ENCODE measurements at regions of chr7 and their contacts with region 1.

Region 1: DNA sequence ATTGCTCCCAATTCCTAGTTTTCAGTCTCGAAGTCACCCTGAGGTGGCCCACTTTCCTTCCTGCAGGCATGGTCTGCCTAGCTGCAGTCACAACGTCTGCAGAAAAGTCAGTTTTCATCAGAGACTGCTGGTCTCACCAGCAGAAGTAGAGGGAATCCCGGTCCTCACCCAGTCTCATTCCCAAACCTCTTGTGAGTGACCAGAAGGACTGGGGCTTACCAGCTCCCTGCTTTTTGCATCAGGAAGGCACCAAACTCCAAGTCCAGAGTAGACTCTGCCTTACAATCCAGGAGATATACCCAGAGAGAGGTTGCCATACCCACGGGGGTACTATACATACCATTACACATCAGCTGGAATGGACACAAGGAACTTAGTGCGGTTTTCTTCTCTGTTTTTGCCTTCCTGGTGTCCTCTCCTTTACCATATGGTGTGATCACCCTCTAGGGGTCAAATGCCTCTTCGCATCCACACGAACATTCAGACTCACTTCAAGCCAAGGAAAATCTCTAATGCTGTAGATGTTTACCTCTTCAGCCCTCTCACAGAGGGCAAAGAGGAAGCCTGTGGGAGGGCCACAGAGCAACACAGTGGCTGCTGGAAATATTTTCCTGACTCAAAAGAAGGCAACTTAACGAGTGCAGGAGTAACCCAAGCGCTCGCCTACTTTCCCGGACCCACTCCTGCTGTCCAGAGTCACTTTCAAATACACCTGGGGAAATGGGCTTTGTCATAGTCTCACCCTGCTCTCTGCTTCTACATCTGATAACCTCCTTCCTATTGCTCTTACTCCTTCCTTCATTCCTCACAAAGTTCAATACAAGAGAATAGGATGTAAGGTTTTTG is 220.9 kb downstream of the C7orf25 start:
- DNase-seq: peak; percentile 57
- H3K4me3 ChIP-seq: no peak overlapping the region
- H3K27ac ChIP-seq: no peak overlapping the region
- H3K4me1 ChIP-seq: no peaks in the 10 kb centered on the region
- H3K27me3 ChIP-seq: no peaks in the 10 kb centered on the region
- CTCF ChIP-seq: peak; percentile 83 to 84

Region 2: GRCh38 chr7:41977151-41977651 is 713.8 kb before region 1 on chr7:
- CTCF ChIA-PET with region 1: no interaction called
- dilution Hi-C with region 1: no loop called
- in situ Hi-C with region 1: no loop called
- intact Hi-C with region 1: loop called (anchors 1 kb)
- DNase-seq: peak; percentile 41
- H3K4me3 ChIP-seq: no peak overlapping the region
- H3K27ac ChIP-seq: no peak overlapping the region
- H3K4me1 ChIP-seq: no peaks in the 10 kb centered on the region
- H3K27me3 ChIP-seq: no peaks in the 10 kb centered on the region
- CTCF ChIP-seq: peak; percentile 82 to 85

Region 3: GRCh38 chr7:42237162-42237821 is 453.7 kb before region 1 on chr7 and contains the start of gene GLI3:
- CTCF ChIA-PET with region 1: no interaction called
- dilution Hi-C with region 1: no loop called
- in situ Hi-C with region 1: loop called in 1 of 2 experiments (anchors 25 kb)
- intact Hi-C with region 1: loop called (anchors 5 kb)
- DNase-seq: peak; percentile 93
- H3K4me3 ChIP-seq: peak within 1 kb of the TSS; percentile 73 to 92 (median 73)
- H3K27ac ChIP-seq: peak within 1 kb of the TSS; percentile 81
- H3K4me1 ChIP-seq: peaks cover 31% of the 10 kb centered on the region
- H3K27me3 ChIP-seq: no peaks in the 10 kb centered on the region
- CTCF ChIP-seq: peak; percentile 5 to 43
- total RNA-seq, gene GLI3: 6.3 to 26.2 TPM

Region 4: DNA sequence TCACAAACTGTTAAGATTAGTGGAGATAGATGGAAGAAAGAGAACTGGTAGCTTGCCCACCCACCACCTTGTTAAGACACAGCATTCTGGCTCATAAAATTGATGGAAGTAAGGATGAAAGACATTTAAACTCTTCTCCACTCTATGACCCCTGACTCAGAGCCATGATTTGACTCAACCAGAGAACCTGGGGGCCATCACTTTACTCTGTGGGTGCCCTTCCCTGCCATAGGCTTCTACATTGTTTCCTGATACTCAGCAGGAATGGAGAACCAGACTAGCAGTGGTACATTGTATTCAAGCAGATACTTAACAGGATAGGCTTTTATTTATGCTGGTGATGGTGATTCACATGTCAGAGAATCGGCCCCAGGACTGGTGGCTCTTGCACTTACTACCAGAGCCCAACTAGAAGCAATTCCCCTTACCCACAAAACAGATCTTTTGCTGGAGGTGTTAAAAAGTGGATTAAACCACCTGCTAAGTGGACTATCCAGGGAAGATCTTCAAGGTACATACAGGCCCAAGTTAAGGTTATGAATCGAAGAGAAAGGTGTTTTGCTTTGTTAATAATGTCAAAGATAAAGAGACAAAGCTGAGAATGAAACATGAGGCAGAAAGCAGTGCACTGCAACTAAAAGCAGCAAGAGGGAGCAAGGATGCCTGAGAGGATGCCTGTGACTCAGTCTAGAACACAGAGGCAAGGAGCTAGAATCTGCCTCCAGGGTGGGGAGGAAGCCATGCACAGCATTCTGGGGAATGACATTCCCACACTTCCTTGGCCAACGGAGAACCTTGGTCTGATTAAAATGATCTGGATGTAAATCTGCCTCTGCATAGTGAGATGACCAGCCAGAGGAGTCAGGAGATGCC is 418.0 kb before region 1 on chr7:
- CTCF ChIA-PET with region 1: no interaction called
- dilution Hi-C with region 1: no loop called
- in situ Hi-C with region 1: no loop called
- intact Hi-C with region 1: loop called (anchors 10 kb)
- DNase-seq: peak; percentile 76
- H3K4me3 ChIP-seq: no peak overlapping the region
- H3K27ac ChIP-seq: peak overlapping the region; percentile 70
- H3K4me1 ChIP-seq: peaks cover 20% of the 10 kb centered on the region
- H3K27me3 ChIP-seq: no peaks in the 10 kb centered on the region
- CTCF ChIP-seq: peak; percentile 84 to 86

Region 5: GRCh38 chr7:42831718-42832431 is 140.9 kb after region 1 on chr7:
- CTCF ChIA-PET with region 1: interaction called, 3 read pairs
- dilution Hi-C with region 1: no loop called
- in situ Hi-C with region 1: no loop called
- intact Hi-C with region 1: loop called (anchors 5 kb)
- DNase-seq: peak; percentile 30
- H3K4me3 ChIP-seq: no peak overlapping the region
- H3K27ac ChIP-seq: no peak overlapping the region
- H3K4me1 ChIP-seq: no peaks in the 10 kb centered on the region
- H3K27me3 ChIP-seq: no peaks in the 10 kb centered on the region
- CTCF ChIP-seq: peak; percentile 60 to 90

Measured in mammary epithelial cell (primary cell).